ENCODE measurements at regions of chr4 and their contacts with region 1.

Region 1: DNA sequence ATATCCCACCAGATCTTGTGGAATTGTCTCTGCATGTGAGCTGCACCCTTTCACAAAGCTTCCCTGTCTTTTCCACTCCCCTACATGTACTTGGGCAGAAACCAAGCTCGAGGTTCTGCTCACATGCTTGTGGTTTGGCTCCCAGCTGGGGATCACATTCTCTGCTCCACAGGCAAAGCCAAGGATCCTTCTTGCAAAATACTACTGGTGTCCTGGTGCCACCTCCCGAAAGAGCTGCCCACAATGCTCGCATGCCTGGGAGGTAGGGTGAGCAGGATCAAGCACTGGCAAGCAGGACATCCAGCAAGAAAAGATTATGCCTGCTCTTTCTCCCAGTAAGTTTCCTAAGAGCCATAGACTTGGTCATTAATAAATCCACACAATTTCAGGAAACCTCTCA is 45.1 kb upstream of the PPARGC1A start:
- DNase-seq: peak; percentile 81

Region 2: GRCh38 chr4:23373261-23373660 is 561.7 kb before region 1 on chr4:
- intact Hi-C with region 1: loop called (anchors 5 kb)
- DNase-seq: peak; percentile 76

Region 3: GRCh38 chr4:23789766-23790165 is 145.1 kb before region 1 on chr4:
- intact Hi-C with region 1: loop called (anchors 5 kb)
- DNase-seq: peak; percentile 82

Region 4: DNA sequence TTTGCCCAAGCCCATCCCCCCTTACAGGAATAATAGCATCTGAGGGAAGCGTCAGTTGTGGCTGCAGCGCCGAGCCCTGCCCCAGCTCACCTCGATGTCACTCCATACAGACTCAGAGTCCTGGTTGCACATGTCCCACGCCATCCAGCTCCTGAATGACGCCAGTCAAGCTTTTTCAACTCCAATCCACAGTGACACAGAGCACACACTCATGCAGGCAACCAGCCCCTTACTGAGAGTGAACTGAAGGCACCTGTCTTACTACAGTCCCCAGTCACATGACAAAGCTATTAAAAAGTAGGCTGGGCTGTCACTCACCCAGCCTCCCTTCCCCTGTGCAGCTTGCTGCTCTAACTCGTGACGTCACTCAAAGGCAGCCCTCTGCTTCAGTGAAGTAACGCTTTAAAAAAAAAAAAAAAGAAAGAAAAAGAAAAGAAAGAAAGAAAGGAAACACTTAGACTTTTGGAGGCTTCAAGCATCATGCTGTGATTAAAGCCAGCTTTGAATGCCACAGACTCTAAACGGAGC is 45.0 kb before region 1 on chr4 and contains the start of gene PPARGC1A:
- intact Hi-C with region 1: loop called (anchors 2 kb)
- DNase-seq: peak; percentile 76
- total RNA-seq, gene PPARGC1A: 99.6 TPM

Region 5: DNA sequence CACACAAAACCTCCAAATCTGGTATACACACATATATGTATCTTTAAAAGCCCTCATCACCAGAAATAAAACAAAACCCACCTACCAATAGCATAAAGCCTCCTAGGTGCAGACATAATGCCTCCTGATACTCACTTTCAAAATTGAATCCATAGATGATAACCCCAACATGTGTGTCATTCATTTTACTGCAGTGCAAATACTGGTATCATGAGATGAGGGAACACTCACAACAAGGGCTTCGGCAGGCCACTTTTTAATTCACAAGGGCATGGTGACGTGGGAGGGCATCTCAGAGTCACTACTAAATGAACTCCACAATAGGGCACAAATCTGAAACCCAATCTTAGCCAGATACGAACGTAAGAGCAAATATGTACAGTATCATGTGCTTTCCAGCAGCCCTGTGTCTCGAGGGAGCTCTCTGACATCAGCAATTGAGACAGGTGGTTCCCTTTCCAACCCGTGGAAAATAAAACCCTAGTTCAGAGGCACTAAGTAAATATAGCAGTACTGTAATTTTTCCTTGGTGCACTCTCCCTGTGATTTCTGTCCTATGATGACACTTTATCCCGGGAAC is 31.0 kb before region 1 on chr4:
- intact Hi-C with region 1: no loop called
- DNase-seq: no peak

Region 6: GRCh38 chr4:24244663-24245490 is 310.0 kb after region 1 on chr4:
- intact Hi-C with region 1: loop called (anchors 2 kb)
- DNase-seq: peak; percentile 80

Region 7: DNA sequence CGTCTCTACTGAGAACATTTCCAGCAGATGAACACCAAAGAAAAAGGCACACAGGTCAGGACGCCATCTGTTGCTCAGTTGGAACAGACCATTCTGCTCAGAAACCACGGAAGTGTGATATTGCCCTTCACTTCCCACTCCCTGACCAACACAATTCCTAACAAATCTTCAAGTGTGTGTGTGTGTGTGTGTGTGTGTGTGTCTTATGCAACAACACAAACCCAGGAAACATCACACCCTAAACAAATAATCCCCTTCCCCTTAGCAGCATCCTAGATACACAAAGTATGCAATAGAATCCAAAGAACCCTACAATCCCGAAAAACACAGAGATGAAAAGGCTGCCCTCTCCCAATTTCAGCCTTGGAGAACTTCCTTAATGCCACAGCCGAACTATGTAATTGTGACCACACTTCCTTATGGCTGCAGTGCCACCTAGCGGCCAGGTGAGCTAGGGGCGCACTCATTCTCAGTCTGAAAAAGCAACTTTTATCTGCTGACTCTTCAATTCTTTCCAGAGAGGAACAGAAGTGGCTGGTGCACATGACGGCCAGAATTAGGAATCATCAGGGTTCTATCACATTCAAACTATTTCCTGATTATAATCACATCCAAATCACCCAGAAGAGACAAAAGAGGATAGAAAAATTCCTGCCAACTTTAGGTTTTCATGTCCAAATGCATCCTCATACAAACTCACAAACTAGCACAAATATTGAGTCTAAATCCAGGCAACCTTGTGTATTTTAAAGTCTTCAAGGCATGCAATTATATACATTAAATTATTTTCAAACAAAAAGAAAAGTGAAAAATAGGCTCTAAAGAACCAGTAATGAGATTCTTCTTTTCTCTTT is 484.5 kb after region 1 on chr4:
- intact Hi-C with region 1: loop called (anchors 5 kb)
- DNase-seq: peak; percentile 84